ENCODE measurements at regions of chr19 and their contacts with region 1.

Region 1: DNA sequence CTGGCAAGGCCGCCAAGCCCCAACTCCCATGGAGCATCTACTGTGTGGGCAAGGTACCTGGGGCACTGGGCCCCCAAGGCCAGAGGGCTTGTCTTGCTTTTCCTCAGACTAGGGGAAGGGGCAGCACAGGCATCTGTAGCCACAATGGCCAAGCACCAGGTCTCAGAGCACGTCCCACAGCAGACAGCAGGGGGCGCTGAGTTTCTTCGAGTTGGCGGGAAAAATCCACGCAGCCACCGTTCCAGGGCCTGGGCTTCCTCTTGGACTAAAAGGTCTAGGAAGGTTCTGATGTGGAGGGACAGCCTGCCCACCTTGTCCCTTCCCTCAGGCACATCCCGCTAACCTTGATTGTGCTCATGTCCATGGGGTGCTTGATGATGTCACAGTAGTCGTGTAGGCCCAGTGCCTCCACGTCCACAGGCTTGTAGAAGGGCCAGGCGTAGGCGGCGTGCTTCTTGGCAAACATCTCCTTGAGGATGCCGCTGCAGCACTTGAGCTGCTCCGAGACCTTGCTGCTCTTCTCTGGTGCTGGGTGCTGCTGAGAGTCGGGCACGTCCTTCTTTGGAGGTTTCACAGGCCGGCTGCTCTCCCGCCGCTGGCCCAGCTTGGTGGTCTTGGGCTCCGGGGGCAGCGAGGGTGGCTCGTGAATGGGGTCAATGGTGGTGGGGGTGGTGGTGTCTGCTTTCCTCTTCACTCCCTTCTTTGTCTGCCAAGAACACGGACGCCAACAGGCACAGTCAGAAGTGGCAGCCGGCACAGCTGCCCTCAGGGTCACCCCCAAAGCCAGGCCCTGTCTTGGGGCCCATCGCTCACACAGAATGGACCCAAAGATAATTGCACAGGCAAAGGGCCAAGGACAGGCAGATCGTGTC is 32.0 kb upstream of the EPHX3 start:
- DNase-seq: peak; percentile 85
- H3K4me3 ChIP-seq: no peak overlapping the region
- H3K27ac ChIP-seq: peak overlapping the region; percentile 12 to 15
- H3K4me1 ChIP-seq: peaks cover 33% of the 10 kb centered on the region
- H3K27me3 ChIP-seq: no peaks in the 10 kb centered on the region
- CTCF ChIP-seq: peak; percentile 63 to 89 (median 82)
- POLR2A ChIP-seq: no peak

Region 2: GRCh38 chr19:15129856-15130597 is 134.3 kb before region 1 on chr19:
- intact Hi-C with region 1: no loop called
- DNase-seq: no peak
- H3K4me3 ChIP-seq: no peak overlapping the region
- H3K27ac ChIP-seq: no peak overlapping the region
- H3K4me1 ChIP-seq: peaks cover 7% of the 10 kb centered on the region
- H3K27me3 ChIP-seq: no peaks in the 10 kb centered on the region
- CTCF ChIP-seq: no peak
- POLR2A ChIP-seq: no peak

Region 3: GRCh38 chr19:15195371-15196334 is 68.6 kb before region 1 on chr19:
- intact Hi-C with region 1: no loop called
- DNase-seq: peak; percentile 50
- H3K4me3 ChIP-seq: peak overlapping the region; percentile 34 to 36
- H3K27ac ChIP-seq: no peak overlapping the region
- H3K4me1 ChIP-seq: peaks cover 10% of the 10 kb centered on the region
- H3K27me3 ChIP-seq: no peaks in the 10 kb centered on the region
- CTCF ChIP-seq: peak in 1 of 3 experiments; percentile 11
- POLR2A ChIP-seq: no peak

Region 4: GRCh38 chr19:15332311-15332996 is 68.2 kb after region 1 on chr19 and contains the start of gene BRD4:
- intact Hi-C with region 1: loop called (anchors 10 kb)
- DNase-seq: peak; percentile 81
- H3K4me3 ChIP-seq: peak within 1 kb of the TSS; percentile 89 to 96
- H3K27ac ChIP-seq: peak within 1 kb of the TSS; percentile 93 to 94
- H3K4me1 ChIP-seq: peaks cover 41% of the 10 kb centered on the region
- H3K27me3 ChIP-seq: no peaks in the 10 kb centered on the region
- CTCF ChIP-seq: no peak
- POLR2A ChIP-seq: no peak
- total RNA-seq, gene BRD4: 106 to 109 TPM

Region 5: DNA sequence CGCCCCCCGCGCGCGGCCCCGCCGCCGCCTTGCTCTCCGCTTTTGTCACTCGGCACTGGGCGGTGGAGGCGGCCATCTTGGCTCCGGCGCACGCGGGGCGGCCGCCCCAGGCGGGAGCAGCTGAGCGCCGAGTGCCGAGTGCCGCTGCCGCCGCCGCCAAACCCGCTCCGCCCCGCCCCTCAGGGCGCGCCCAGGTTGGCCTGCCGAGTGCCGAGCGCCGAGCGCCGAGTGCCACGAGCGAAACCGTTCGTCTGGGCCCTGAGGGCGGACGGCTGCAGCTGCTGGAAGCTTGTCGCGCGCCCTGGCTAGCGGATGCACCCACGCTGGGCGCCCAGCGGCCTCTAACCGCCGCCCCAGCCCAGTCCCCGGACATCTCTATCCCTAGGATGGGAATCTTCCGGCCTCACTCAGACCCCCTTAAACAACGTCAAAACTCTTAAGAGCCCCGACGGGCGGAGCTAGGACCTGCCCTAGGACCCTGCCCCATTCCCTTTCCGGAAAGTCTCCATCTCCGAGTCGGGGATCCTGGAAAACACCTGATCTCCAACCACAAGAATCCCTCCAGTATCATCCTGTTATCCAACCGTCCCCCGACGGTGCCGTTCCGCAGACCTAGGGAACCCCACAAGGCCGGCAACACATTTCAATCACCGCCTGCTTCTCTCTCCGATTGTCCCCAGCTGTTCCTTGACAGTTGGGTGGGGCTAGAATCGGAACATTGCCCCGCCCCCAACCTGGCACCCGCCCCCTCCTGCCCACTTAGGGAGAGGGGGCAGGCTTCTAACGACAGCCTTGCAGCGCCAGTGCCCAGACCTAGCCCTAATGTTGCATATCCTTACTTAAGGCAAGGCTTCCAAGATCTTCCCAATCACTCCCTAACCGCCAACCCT is 168.6 kb after region 1 on chr19:
- intact Hi-C with region 1: loop called (anchors 10 kb)
- DNase-seq: peak; percentile 95
- H3K4me3 ChIP-seq: peak overlapping the region; percentile 68 to 77
- H3K27ac ChIP-seq: peak overlapping the region; percentile 71 to 82
- H3K4me1 ChIP-seq: peaks cover 18% of the 10 kb centered on the region
- H3K27me3 ChIP-seq: no peaks in the 10 kb centered on the region
- CTCF ChIP-seq: peak in 1 of 3 experiments; percentile 20
- POLR2A ChIP-seq: no peak

Region 6: DNA sequence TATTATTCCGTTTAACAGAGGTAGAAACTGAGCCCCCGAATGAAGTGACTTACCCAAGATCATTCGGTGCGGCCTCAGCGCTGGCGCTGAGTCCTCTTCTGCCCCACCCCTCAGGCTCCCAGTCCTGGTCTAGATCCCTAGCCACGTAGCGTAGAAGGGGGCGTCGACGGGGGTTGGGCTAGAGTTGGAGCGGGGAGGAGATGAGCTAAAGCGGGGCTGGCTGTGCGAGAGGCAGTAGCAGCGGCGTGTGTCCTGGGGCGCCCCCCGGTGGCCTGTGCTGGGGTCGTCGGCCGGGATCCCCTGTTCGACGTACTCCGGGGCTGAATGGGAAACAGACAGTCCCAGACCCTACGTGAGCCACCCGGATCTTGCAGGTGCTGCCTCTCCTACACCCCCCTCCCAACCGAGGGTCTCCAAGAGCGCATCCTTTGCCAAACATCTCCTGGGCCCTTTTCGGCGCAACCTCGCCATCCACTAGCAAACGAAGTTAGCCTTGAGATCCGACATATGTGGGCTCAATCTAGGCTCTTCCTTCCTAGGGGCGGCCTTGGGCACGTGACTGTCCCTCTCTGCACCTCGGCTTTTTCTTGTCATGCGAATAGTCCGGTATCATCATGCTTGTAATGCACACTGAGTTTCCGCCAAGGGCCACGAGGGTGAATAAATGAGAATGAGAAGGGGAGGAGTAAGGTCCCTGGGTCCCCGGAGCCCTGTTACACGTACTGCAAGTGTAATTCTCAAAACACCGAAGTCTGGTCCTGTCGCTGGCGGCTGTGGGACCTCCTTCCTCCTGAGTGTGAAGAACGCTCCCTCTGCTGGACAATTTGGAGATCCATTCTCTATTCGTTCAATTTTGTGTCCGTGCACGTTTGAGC is 291.7 kb after region 1 on chr19:
- intact Hi-C with region 1: loop called (anchors 10 kb)
- DNase-seq: peak; percentile 96
- H3K4me3 ChIP-seq: peak overlapping the region; percentile 36 to 37
- H3K27ac ChIP-seq: no peak overlapping the region
- H3K4me1 ChIP-seq: peaks cover 12% of the 10 kb centered on the region
- H3K27me3 ChIP-seq: no peaks in the 10 kb centered on the region
- CTCF ChIP-seq: peak; percentile 20 to 89 (median 57)
- POLR2A ChIP-seq: no peak